Activated naive CD4-positive, alpha-beta T cell treated with anti-CD3 and anti-CD28 coated beads for 36 hours (primary cell): ENCODE measurements at regions of chr20 and their contacts with region 1.

Region 1: DNA sequence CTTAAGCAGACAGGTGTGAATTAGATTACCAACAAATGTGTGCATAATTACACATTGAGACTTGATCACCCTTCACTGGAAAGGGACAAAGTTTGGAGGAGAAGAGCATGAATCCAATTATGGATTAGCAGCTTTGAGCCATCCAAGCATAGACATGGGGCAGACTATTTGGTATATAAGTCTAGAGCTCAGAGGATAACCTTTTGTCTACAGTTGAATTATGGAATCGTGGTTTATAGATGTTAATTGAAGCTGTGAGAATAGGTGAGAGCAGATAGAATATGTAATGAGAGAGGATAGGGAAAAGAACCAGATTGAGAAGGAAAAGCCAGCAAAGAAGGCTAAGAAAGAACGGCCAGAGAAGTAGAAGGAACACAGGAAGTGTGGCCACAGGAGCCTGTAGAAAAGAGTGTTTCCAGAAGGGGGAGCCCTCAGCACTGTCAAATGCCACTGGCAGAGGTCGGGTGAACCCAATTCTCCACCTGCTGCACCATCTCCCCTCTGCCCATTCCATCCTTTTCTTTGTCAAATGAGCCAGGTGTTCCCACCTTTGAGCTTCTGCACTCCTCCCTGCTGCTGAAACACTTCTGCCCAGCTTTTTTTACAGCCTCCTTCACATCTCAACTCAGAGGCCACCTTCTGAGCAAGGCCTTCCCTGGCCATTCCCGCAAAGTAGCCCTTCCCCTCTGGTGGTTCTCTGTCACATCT is 7.3 kb downstream of the DNTTIP1 start:
- DNase-seq: peak; percentile 82
- H3K4me3 Mint-ChIP-seq: no peak overlapping the region
- H3K27ac Mint-ChIP-seq: no peak overlapping the region
- H3K4me1 Mint-ChIP-seq: peaks cover 10% of the 10 kb centered on the region
- H3K27me3 Mint-ChIP-seq: no peaks in the 10 kb centered on the region

Region 2: GRCh38 chr20:45812157-45813020 is 13.3 kb after region 1 on chr20 and contains the start of gene UBE2C:
- CTCF ChIA-PET with region 1: interaction called, 11 read pairs
- intact Hi-C with region 1: no loop called
- DNase-seq: peak; percentile 98
- H3K4me3 Mint-ChIP-seq: peak within 1 kb of the TSS; percentile 94
- H3K27ac Mint-ChIP-seq: peak within 1 kb of the TSS; percentile 82
- H3K4me1 Mint-ChIP-seq: peaks cover 17% of the 10 kb centered on the region
- H3K27me3 Mint-ChIP-seq: no peaks in the 10 kb centered on the region
- total RNA-seq, gene UBE2C: 189 to 202 TPM

Region 3: GRCh38 chr20:45880988-45881788 is 82.1 kb after region 1 on chr20 and contains the start of gene ZSWIM1:
- CTCF ChIA-PET with region 1: interaction called, 4 read pairs
- intact Hi-C with region 1: loop called (anchors 1 kb)
- DNase-seq: peak; percentile 100
- H3K4me3 Mint-ChIP-seq: peak within 1 kb of the TSS; percentile 94
- H3K27ac Mint-ChIP-seq: peak within 1 kb of the TSS; percentile 93
- H3K4me1 Mint-ChIP-seq: peaks cover 48% of the 10 kb centered on the region
- H3K27me3 Mint-ChIP-seq: no peaks in the 10 kb centered on the region
- total RNA-seq, gene ZSWIM1: 8.2 to 8.4 TPM

Region 4: DNA sequence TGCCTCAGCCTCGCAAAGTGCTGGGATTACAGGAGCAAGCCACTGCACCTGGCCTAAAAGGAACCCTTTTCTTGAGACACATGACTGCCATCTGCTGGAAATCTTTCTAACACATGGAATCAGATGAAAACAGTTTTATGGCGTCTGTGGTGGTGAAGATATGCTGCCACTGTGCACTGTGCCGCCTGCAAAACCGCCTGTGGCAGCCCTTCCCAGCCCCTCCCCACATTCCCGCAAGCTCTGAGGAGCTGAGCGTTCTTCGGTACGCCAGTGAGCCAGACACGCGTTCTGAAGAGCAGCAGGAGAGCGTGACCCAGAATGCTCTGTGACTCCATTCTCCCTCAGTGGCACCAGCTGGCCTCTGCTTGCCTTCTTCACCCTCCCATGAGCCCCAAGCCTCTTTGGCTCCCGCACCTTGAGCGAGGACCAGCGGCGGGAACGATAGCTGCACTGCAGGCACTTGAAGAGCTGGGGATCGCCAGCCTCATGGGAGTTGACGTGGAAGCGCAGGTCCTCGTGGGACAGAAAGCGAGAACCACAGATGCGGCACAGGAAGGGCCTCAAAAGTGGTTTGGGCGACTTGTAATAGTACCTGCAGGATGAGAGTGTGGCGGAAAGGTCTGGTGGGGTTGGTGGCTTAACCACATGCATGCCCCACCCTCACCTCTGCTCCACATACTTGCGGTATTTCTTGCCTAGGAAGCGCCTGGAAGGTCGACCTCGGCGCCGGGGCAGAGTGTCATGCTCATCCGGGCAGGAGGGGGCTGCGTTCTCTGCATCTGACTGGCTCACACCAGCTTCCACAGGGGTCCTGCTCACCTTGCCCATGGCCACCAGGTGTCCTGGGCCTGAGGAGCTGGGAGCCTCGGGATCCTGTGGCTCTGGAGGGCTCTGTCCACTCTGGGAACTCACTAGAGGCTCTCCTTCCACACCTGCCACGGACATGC is 164.2 kb after region 1 on chr20:
- CTCF ChIA-PET with region 1: interaction called, 24 read pairs
- intact Hi-C with region 1: loop called (anchors 1 kb)
- DNase-seq: no peak
- H3K4me3 Mint-ChIP-seq: no peak overlapping the region
- H3K27ac Mint-ChIP-seq: no peak overlapping the region
- H3K4me1 Mint-ChIP-seq: peaks cover 2% of the 10 kb centered on the region
- H3K27me3 Mint-ChIP-seq: no peaks in the 10 kb centered on the region